Activated CD4-positive, alpha-beta T cell treated with anti-CD3 and anti-CD28 coated beads, Interleukin-2, amount 10 ng/mL, durations not matched to agents 24 days and 14 days (primary cell): ENCODE measurements at regions of chr11 and their contacts with region 1.

Region 1: DNA sequence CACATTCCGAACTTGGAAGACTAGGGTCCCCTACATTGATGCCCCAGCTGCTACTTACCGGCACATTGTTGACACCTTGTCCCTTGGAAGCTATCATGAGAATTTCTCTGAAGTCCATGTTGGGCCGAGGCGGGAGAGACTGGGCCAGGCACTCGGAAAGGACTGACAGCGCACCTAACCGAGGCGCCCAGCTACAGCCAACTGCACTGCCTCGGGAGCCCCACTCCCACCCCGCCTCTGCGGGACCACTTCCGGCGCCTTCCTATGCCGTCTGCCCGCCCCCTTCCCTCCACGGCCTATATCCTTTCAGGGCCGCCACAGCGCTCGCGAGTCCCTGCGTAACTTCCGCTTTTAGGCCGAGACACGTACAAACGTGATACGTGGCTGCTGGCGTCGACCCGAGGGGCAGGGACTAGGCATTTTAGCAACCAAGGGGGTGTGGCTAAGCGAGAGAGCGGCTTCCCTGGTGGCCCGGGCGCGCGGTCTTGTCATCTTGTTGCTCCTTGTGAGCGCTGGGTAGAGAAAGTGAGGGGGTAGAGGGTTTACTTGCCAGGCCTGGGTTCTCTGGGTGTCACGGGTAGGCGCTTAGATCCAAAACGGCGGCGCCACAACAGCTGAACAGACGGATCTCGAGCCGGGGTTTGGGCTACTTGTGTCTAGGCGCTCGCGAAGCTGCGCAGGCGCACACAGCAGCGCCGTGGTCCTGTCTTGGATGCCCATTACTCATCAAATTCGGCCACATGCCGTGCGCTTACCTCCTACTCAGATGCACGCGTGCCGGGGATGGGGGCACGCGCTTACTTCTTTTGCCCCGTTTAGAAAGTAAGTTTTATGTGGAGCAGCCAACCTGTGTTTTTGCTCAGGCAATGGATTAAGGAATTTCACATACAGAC is at the start of gene SPTY2D1:
- DNase-seq: peak; percentile 99
- H3K4me3 Mint-ChIP-seq: peak within 1 kb of the TSS; percentile 93
- H3K27ac Mint-ChIP-seq: peak within 1 kb of the TSS; percentile 98
- H3K4me1 Mint-ChIP-seq: peaks cover 24% of the 10 kb centered on the region
- H3K27me3 Mint-ChIP-seq: no peaks in the 10 kb centered on the region
- total RNA-seq, gene SPTY2D1: 22.6 and 22.8 TPM in 2 replicates

Region 2: GRCh38 chr11:18321980-18322711 is 312.2 kb before region 1 on chr11 and contains the starts of genes GTF2H1 and HPS5:
- intact Hi-C with region 1: loop called (anchors 1 kb)
- DNase-seq: peak; percentile 99
- H3K4me3 Mint-ChIP-seq: peak within 1 kb of the TSS; percentile 94
- H3K27ac Mint-ChIP-seq: peak within 1 kb of the TSS; percentile 99
- H3K4me1 Mint-ChIP-seq: peaks cover 55% of the 10 kb centered on the region
- H3K27me3 Mint-ChIP-seq: no peaks in the 10 kb centered on the region
- total RNA-seq, gene GTF2H1: 54.6 and 55.7 TPM in 2 replicates
- total RNA-seq, gene HPS5: 20.5 and 24.5 TPM in 2 replicates

Region 3: DNA sequence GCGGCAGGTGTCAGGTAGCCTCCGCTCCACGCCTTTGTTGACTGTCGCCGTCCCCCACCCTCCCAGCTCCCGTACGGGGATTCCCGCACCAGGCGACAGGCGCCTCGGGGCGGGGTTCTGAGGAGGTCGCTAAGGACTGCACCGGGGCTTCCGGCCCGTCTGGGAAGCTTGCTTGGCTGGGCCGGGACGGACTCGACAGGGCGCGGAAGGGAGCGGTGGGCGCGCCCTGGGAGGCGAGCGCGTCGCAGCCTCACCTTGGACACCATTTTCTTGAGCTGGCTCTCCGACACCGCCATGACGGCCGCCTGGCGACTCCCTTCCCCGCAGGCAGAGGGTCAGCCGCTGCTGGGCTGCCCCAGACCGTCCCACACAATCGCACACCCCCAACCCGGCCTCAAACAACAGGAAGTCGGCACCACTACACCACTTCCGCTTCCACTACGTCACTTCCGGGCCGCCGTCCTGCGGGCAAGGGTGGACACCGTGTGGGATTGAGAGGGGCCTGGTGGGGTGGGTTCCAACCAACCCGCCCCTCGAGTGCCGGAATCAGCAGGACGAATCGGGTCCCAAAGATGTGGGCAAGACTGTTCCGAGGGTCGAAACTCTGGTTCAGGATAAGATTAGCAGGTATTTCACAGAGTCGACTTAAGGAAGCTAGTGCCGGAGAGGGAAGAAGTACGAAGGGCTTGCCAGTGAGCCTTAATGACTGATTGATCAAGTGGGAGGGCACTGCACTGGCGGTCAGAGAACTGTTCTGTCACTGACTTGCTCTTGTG is 107.7 kb before region 1 on chr11 and contains the start of gene TSG101:
- intact Hi-C with region 1: loop called (anchors 1 kb)
- DNase-seq: peak; percentile 98
- H3K4me3 Mint-ChIP-seq: peak within 1 kb of the TSS; percentile 99
- H3K27ac Mint-ChIP-seq: peak within 1 kb of the TSS; percentile 100
- H3K4me1 Mint-ChIP-seq: peaks cover 29% of the 10 kb centered on the region
- H3K27me3 Mint-ChIP-seq: no peaks in the 10 kb centered on the region
- total RNA-seq, gene TSG101: 39.6 and 43.5 TPM in 2 replicates

Region 4: GRCh38 chr11:18588297-18589252 is 45.8 kb before region 1 on chr11 and contains the start of gene UEVLD:
- intact Hi-C with region 1: loop called (anchors 1 kb)
- DNase-seq: peak; percentile 91
- H3K4me3 Mint-ChIP-seq: no peak within 1 kb of the TSS
- H3K27ac Mint-ChIP-seq: no peak within 1 kb of the TSS
- H3K4me1 Mint-ChIP-seq: peaks cover 12% of the 10 kb centered on the region
- H3K27me3 Mint-ChIP-seq: no peaks in the 10 kb centered on the region
- total RNA-seq, gene UEVLD: 19.2 and 20.7 TPM in 2 replicates

Region 5: DNA sequence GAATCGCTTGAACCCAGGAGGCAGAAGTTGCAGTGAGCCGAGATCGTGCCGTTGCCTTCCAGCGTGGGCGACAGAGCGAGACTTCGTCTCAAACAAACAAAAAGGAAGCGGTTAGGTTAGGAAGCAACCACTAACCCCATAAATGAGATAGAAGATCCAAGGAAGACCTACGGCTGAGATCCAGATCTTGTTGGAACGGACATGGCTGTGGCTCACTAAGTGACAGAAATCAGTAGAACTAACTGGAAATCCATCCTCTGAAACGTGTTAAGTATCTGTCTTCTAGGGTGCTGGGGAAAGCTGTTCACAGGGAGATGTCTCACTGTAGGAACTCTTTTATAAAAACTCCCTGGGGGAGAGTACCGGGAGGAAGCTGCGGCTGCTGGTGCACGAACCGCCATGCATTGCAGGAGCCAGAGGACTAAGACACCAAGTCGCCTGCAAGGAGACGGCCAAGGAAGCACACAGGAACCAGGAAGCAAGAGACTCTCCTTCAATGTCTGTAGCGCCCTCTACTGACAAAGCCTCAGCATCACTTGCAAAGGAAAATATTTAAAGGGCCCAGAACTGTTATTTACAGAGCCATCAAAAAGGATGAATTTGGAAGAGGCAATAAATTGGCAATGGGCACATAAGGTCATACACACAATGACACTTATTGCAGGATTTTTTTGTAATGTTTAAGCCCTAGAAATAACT is 16.6 kb after region 1 on chr11:
- intact Hi-C with region 1: loop called (anchors 2 kb)
- DNase-seq: peak; percentile 86
- H3K4me3 Mint-ChIP-seq: no peak overlapping the region
- H3K27ac Mint-ChIP-seq: no peak overlapping the region
- H3K4me1 Mint-ChIP-seq: peaks cover 8% of the 10 kb centered on the region
- H3K27me3 Mint-ChIP-seq: no peaks in the 10 kb centered on the region

Region 6: GRCh38 chr11:18669220-18669598 is 34.8 kb after region 1 on chr11:
- intact Hi-C with region 1: no loop called
- DNase-seq: peak; percentile 68
- H3K4me3 Mint-ChIP-seq: peak overlapping the region; percentile 39
- H3K27ac Mint-ChIP-seq: peak overlapping the region; percentile 62
- H3K4me1 Mint-ChIP-seq: peaks cover 34% of the 10 kb centered on the region
- H3K27me3 Mint-ChIP-seq: peaks cover 12% of the 10 kb centered on the region

Region 7: DNA sequence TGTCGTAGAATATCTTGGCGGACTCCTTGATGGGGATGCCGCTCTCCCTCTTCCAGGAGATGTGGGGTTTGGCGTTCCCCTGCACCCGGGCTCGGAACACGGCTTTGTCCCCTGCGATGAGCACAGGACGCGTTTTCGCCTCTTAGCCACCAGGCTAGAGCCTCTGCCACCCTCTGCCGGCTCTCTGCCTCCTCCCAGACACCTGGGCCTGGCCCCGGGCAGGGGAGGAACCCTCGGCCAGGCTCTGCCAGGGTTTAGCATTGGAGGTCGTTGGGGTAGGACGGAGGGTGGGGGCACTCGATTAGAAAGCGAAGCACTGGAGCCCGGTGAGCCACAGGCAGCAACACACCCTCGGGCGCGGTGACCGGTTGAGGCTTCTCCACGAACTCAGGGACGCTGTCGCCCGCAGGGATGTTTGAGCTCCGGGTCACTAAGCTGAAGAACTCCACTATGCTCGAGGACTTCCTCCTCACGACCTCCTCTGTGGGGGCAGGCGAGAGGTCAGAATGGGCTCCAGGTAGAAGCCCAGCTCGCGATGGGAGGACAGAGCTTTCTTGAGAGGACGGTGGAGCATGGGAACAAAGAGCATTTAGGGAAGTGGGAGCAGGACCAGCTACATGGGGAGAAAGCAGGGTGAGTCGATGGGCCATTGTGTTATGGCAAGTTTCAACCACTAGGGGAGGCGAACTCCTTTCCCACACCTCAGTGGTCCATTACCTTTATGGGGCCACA is 87.3 kb after region 1 on chr11:
- intact Hi-C with region 1: loop called (anchors 2 kb)
- DNase-seq: peak; percentile 85
- H3K4me3 Mint-ChIP-seq: peak overlapping the region; percentile 93
- H3K27ac Mint-ChIP-seq: no peak overlapping the region
- H3K4me1 Mint-ChIP-seq: peaks cover 8% of the 10 kb centered on the region
- H3K27me3 Mint-ChIP-seq: peaks cover 26% of the 10 kb centered on the region